HEK293 (cell line): ENCODE measurements at regions of chr12 and their contacts with region 1.

Region 1: GRCh38 chr12:42372154-42372791 is 46.3 kb downstream of the PPHLN1 start:
- H3K4me3 ChIP-seq: no peak overlapping the region
- H3K27ac ChIP-seq: no peak overlapping the region
- H3K4me1 ChIP-seq: no peaks in the 10 kb centered on the region
- CTCF ChIP-seq: peak; percentile 65

Region 2: GRCh38 chr12:42129595-42130204 is 242.6 kb before region 1 on chr12:
- CTCF ChIA-PET with region 1: interaction called, 13 read pairs
- POLR2A ChIA-PET with region 1: interaction called, 6 read pairs
- H3K4me3 ChIP-seq: no peak overlapping the region
- H3K27ac ChIP-seq: no peak overlapping the region
- H3K4me1 ChIP-seq: peaks cover 14% of the 10 kb centered on the region
- CTCF ChIP-seq: peak; percentile 53; the same call in 1 of the 2 replicates

Region 3: GRCh38 chr12:42338280-42338679 is 34.0 kb before region 1 on chr12:
- CTCF ChIA-PET with region 1: interaction called, 12 read pairs
- POLR2A ChIA-PET with region 1: no interaction called
- H3K4me3 ChIP-seq: no peak overlapping the region
- H3K27ac ChIP-seq: no peak overlapping the region
- H3K4me1 ChIP-seq: no peaks in the 10 kb centered on the region
- CTCF ChIP-seq: no peak

Region 4: GRCh38 chr12:42346403-42347002 is 25.8 kb before region 1 on chr12:
- CTCF ChIA-PET with region 1: interaction called, 15 read pairs
- POLR2A ChIA-PET with region 1: no interaction called
- H3K4me3 ChIP-seq: no peak overlapping the region
- H3K27ac ChIP-seq: no peak overlapping the region
- H3K4me1 ChIP-seq: peaks cover 4% of the 10 kb centered on the region; the same call in 1 of the 2 replicates
- CTCF ChIP-seq: no peak

Region 5: DNA sequence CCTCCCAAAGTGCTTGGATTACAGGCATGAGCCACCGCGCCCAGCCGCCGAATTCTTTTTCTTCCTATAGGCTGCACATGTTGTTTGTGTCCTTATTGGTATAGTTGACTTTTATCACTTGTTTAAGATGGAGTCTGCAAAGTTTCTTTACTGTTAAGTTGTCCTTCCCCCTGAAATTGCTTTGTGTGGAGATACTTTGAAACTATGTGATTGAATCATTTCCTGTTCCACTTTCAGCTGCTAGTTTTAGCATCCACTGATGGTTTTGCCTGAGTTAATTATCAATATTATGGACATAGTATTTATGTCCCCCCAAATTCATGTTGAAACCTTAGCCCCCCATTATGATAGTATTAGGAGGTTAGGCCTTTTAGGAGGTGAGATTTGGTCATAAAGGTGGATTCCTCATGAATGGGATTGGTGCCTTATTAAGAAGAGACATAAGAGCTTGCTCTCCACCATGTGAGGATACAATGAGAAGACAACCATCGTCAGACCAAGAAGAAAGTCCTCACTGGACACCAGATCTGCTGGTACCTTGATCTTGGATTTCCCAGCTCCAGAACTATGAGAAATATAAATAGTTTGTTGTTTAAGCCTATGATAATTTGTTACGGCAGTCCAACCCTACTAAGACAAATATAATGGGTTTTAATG is 11.4 kb before region 1 on chr12:
- CTCF ChIA-PET with region 1: interaction called, 11 read pairs
- POLR2A ChIA-PET with region 1: no interaction called
- H3K4me3 ChIP-seq: no peak overlapping the region
- H3K27ac ChIP-seq: no peak overlapping the region
- H3K4me1 ChIP-seq: peaks cover 9% of the 10 kb centered on the region
- CTCF ChIP-seq: no peak

Region 6: DNA sequence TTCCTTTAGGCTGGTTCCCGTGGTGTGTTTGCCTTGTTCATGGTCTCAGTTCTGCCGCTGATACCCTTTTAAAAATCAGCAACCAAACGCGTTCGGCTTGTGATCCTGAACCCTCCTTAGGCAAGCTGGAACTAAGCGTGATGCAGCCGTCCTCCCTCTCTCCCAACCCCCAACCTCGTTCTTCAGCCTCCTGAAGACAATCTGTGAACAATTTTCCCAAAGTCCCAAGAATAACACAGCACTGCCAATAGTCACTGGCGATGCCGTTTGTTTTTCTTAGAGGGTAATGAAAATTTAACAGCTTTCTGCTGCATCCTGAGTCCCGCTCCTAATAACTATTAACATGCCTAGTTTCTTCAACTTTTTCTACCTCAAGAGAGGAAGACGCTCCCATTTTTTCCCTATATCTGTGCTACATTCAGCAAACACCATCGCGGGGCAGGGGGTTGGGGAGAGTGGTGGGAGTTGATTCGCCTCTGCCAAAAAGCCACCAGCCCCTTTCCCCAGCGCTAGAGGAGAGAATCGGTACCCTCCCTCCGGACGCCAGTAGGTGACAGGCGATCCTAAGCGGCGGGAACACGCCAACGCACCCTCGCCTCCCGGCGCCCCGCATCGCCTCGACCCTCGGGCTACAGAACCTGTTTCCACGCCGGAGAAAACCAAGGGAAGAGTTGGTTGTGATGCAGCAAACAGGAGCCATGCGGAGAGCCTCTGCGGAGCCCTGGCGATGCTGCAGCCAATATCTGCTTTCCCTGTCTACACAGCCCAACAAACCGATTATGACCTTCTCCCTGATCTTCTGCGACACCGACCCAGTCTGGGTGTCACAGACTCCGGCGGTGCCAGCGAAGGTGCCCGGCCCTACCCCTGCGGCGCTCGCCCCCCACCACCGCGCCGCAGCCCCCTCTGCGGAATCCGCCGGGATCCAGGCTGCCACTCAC is 216.5 kb after region 1 on chr12:
- CTCF ChIA-PET with region 1: no interaction called
- POLR2A ChIA-PET with region 1: no interaction called
- H3K4me3 ChIP-seq: peak overlapping the region; percentile 94
- H3K27ac ChIP-seq: peak overlapping the region; percentile 97
- H3K4me1 ChIP-seq: peaks cover 25% of the 10 kb centered on the region
- CTCF ChIP-seq: peak; percentile 89

Region 7: GRCh38 chr12:43338848-43339526 is 966.7 kb after region 1 on chr12:
- CTCF ChIA-PET with region 1: interaction called, 10 read pairs
- POLR2A ChIA-PET with region 1: no interaction called
- H3K4me3 ChIP-seq: no peak overlapping the region
- H3K27ac ChIP-seq: no peak overlapping the region
- H3K4me1 ChIP-seq: peaks cover 7% of the 10 kb centered on the region; the same call in 1 of the 2 replicates
- CTCF ChIP-seq: peak; percentile 92